ENCODE measurements at regions of chr4 and their contacts with region 1.

Region 1: GRCh38 chr4:89123451-89123851 is 12.1 kb downstream of the TIGD2 start:
- DNase-seq: no peak
- ATAC-seq: no peak
- H3K4me3 ChIP-seq: no peak overlapping the region
- H3K4me3 Mint-ChIP-seq: no peak overlapping the region
- H3K27ac ChIP-seq: no peak overlapping the region
- H3K27ac Mint-ChIP-seq: no peak overlapping the region
- H3K4me1 ChIP-seq: peaks cover 0 to 2% of the 10 kb centered on the region in 2 experiments
- H3K4me1 Mint-ChIP-seq: peaks cover 0 to 4% (median 0%) of the 10 kb centered on the region in 3 donors
- H3K27me3 ChIP-seq: no peaks in the 10 kb centered on the region
- H3K27me3 Mint-ChIP-seq: peaks cover 0 to 3% of the 10 kb centered on the region in 2 donors

Region 2: GRCh38 chr4:88297725-88298454 is 825.6 kb before region 1 on chr4:
- CTCF ChIA-PET with region 1: no interaction called
- POLR2A ChIA-PET with region 1: interaction called in 1 of 2 experiments, 15 read pairs
- DNase-seq: no peak
- ATAC-seq: no peak
- H3K4me3 ChIP-seq: no peak overlapping the region
- H3K4me3 Mint-ChIP-seq: no peak overlapping the region
- H3K27ac ChIP-seq: no peak overlapping the region
- H3K27ac Mint-ChIP-seq: no peak overlapping the region
- H3K4me1 ChIP-seq: no peaks in the 10 kb centered on the region
- H3K4me1 Mint-ChIP-seq: no peaks in the 10 kb centered on the region
- H3K27me3 ChIP-seq: no peaks in the 10 kb centered on the region
- H3K27me3 Mint-ChIP-seq: no peaks in the 10 kb centered on the region

Region 3: GRCh38 chr4:89157488-89158024 is 34.1 kb after region 1 on chr4:
- CTCF ChIA-PET with region 1: no interaction called
- POLR2A ChIA-PET with region 1: no interaction called
- DNase-seq: no peak
- ATAC-seq: no peak
- H3K4me3 ChIP-seq: no peak overlapping the region
- H3K4me3 Mint-ChIP-seq: no peak overlapping the region
- H3K27ac ChIP-seq: no peak overlapping the region
- H3K27ac Mint-ChIP-seq: no peak overlapping the region
- H3K4me1 ChIP-seq: no peaks in the 10 kb centered on the region
- H3K4me1 Mint-ChIP-seq: peaks cover 0 to 2% (median 0%) of the 10 kb centered on the region in 3 donors
- H3K27me3 ChIP-seq: peaks cover 0 to 3% of the 10 kb centered on the region in 2 experiments
- H3K27me3 Mint-ChIP-seq: peaks cover 0 to 2% of the 10 kb centered on the region in 2 donors

Region 4: GRCh38 chr4:89213062-89213701 is 89.7 kb after region 1 on chr4:
- CTCF ChIA-PET with region 1: no interaction called
- POLR2A ChIA-PET with region 1: no interaction called
- DNase-seq: no peak
- ATAC-seq: no peak
- H3K4me3 ChIP-seq: no peak overlapping the region
- H3K4me3 Mint-ChIP-seq: no peak overlapping the region
- H3K27ac ChIP-seq: no peak overlapping the region
- H3K27ac Mint-ChIP-seq: no peak overlapping the region
- H3K4me1 ChIP-seq: no peaks in the 10 kb centered on the region
- H3K4me1 Mint-ChIP-seq: no peaks in the 10 kb centered on the region
- H3K27me3 ChIP-seq: no peaks in the 10 kb centered on the region
- H3K27me3 Mint-ChIP-seq: peaks cover 11 to 18% of the 10 kb centered on the region in 2 donors

Region 5: DNA sequence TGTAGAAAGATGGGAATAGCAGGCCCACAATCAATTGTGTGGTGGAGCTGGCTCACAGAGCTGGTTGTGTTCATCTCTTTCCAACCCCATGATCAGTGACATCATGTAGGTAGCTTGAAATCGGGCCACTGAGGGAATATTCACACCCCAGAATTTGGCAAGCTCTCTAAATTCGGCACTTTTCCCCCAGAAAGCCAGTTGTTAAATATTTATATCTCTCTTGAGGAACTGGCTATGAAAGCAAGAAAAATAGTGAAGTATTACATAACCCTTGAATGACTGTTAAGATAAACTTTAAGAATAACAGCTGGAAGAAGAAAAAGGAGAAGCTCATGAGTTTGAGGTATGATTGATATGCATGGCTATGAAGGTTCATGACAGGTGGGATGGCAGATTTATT is 145.2 kb after region 1 on chr4:
- CTCF ChIA-PET with region 1: no interaction called
- POLR2A ChIA-PET with region 1: interaction called in 1 of 2 experiments, 15 read pairs
- DNase-seq: no peak
- ATAC-seq: no peak
- H3K4me3 ChIP-seq: no peak overlapping the region
- H3K4me3 Mint-ChIP-seq: no peak overlapping the region
- H3K27ac ChIP-seq: no peak overlapping the region
- H3K27ac Mint-ChIP-seq: peak overlapping the region; percentile 31 to 66
- H3K4me1 ChIP-seq: peaks cover 1 to 18% of the 10 kb centered on the region in 2 experiments
- H3K4me1 Mint-ChIP-seq: peaks cover 81 to 85% (median 83%) of the 10 kb centered on the region in 3 donors
- H3K27me3 ChIP-seq: no peaks in the 10 kb centered on the region
- H3K27me3 Mint-ChIP-seq: no peaks in the 10 kb centered on the region